SK-N-SH (cell line): ENCODE measurements at regions of chr13 and their contacts with region 1.

Region 1: GRCh38 chr13:59318320-59318930 is 845.3 kb downstream of the DIAPH3 start:
- DNase-seq: peak; percentile 44
- H3K4me3 ChIP-seq: no peak overlapping the region; a peak in 1 of 4 replicates
- H3K27ac ChIP-seq: peak overlapping the region in 1 of 2 experiments; percentile 34; a peak in 2 of 4 replicates
- H3K4me1 ChIP-seq: peaks cover 0 to 4% of the 10 kb centered on the region in 2 experiments; a peak in 3 of 4 replicates
- H3K27me3 ChIP-seq: no peaks in the 10 kb centered on the region
- CTCF ChIP-seq: peak; percentile 89
- EP300 ChIP-seq: no peak
- RAD21 ChIP-seq: peak; percentile 86

Region 2: DNA sequence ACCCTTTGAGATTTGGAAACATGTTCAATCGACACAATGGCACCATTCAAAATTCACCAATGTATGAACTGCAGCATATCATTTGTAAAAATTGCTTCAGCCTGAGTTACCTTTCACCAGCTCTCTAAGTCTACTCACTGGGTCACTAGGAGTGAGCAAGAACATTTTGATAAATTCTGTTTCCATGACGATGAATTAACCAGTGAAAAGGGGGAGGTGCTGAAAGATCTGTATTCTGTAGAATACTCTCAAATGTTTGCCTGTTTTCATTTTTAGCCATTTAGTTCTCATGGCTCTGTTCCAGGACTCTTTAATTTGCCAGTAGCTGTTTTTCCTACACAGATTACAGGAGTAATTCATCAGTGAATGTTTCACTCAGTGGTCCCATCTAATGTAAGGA is 38.1 kb before region 1 on chr13:
- CTCF ChIA-PET with region 1: interaction called, 14 read pairs
- POLR2A ChIA-PET with region 1: no interaction called
- DNase-seq: peak; percentile 30
- H3K4me3 ChIP-seq: no peak overlapping the region
- H3K27ac ChIP-seq: peak overlapping the region in 1 of 2 experiments; percentile 98; a peak in 2 of 4 replicates
- H3K4me1 ChIP-seq: peaks cover 0 to 24% of the 10 kb centered on the region in 2 experiments; a peak in 2 of 4 replicates
- H3K27me3 ChIP-seq: no peaks in the 10 kb centered on the region
- CTCF ChIP-seq: no peak
- EP300 ChIP-seq: peak in 1 of 2 experiments; percentile 73; a peak in 2 of 4 replicates
- RAD21 ChIP-seq: peak; percentile 22; the same call in 1 of the 2 replicates

Region 3: DNA sequence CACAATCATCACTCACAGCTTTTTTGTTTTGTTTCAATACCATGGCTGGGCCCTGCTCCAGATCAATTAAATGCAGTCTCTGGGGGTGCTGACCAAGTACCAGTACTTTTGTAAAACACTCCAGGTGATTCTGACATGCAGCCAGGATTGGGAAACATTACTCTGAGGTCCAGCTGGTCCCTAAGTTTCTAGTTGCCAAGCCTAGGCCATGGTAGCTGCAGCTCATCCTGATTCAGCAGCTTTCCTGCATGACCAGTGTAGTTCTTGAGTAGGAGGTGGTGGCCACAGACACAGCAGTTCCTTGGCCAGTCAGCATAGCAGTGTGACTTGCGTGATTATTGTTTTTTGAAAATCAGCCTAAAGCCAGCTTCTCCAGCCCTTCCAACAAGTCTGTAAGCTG is 13.8 kb before region 1 on chr13:
- CTCF ChIA-PET with region 1: interaction called, 17 read pairs
- POLR2A ChIA-PET with region 1: no interaction called
- DNase-seq: no peak
- H3K4me3 ChIP-seq: no peak overlapping the region
- H3K27ac ChIP-seq: no peak overlapping the region
- H3K4me1 ChIP-seq: peaks cover 0 to 3% of the 10 kb centered on the region in 2 experiments; a peak in 1 of 4 replicates
- H3K27me3 ChIP-seq: no peaks in the 10 kb centered on the region
- CTCF ChIP-seq: no peak
- EP300 ChIP-seq: no peak
- RAD21 ChIP-seq: no peak